Activated CD4-positive, alpha-beta T cell treated with anti-CD3 and anti-CD28 coated beads for 36 hours (primary cell): ENCODE measurements at regions of chr11 and their contacts with region 1.

Region 1: DNA sequence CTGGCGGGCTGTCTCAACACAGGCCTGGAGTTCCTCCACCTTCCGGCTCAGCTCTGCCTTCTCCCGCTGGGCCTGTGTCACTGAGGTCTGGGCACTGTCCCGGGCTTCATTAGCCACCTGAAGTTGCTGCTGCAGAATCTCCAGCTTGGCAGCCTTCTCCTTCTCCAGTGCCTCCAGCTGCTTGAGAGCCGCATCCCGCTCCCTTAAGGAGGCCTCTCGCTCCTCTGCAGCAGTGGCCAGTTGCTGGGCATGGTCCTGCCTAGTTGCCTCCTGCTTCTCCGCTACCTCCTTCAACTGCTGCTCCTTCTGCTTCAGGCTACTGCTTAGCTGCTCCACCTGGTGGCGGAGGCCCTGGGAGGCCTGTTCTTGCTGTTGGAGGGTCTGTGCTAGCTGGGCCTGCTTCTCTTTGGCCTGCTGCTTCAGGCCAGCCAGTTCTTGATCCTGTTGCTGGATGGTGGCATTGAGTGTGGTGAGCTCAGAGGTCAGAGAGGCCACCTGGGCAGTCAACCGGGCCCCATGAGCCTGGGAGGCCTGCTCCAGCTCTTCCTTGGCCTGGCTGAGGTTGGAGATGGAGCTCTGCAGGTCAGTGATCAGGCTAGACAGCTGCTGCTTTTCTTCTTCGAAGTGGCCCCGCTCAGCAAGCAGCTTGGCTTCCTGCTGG is 16.9 kb downstream of the IL18BP start:
- DNase-seq: peak; percentile 41
- ATAC-seq: no peak
- H3K4me3 Mint-ChIP-seq: no peak overlapping the region
- H3K27ac Mint-ChIP-seq: no peak overlapping the region
- H3K4me1 Mint-ChIP-seq: no peaks in the 10 kb centered on the region
- H3K27me3 Mint-ChIP-seq: no peaks in the 10 kb centered on the region

Region 2: GRCh38 chr11:71971680-71972079 is 44.0 kb before region 1 on chr11:
- CTCF ChIA-PET with region 1: interaction called, 3 read pairs
- POLR2A ChIA-PET with region 1: no interaction called
- intact Hi-C with region 1: loop called in 1 of 2 experiments (anchors 5 kb)
- DNase-seq: no peak
- ATAC-seq: no peak
- H3K4me3 Mint-ChIP-seq: no peak overlapping the region
- H3K27ac Mint-ChIP-seq: peak overlapping the region; percentile 11
- H3K4me1 Mint-ChIP-seq: peaks cover 2% of the 10 kb centered on the region
- H3K27me3 Mint-ChIP-seq: no peaks in the 10 kb centered on the region

Region 3: DNA sequence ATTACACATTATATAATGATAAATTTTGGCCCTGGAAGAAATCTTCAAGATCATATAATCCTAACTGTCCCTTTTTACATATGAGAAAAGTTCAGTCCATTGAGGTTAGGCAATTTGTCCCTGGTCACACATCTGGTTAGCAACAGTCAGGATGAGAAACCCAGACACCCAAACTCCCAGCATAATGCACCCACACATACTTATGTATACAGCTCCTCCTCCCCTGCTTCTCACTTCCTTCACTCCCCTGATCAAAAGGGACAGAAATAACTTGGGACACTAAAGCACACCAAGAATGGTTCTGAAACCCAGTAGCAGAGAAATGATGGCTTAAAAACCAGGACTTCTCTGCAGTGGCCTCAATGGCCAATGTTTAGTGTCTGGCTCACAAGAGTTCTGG is 53.6 kb after region 1 on chr11:
- CTCF ChIA-PET with region 1: no interaction called
- POLR2A ChIA-PET with region 1: no interaction called
- intact Hi-C with region 1: no loop called
- DNase-seq: no peak
- ATAC-seq: peak; percentile 48
- H3K4me3 Mint-ChIP-seq: no peak overlapping the region
- H3K27ac Mint-ChIP-seq: no peak overlapping the region
- H3K4me1 Mint-ChIP-seq: peaks cover 46% of the 10 kb centered on the region
- H3K27me3 Mint-ChIP-seq: no peaks in the 10 kb centered on the region